Thyroid gland (tissue), 4 donors: ENCODE measurements at regions of chr14 and their contacts with region 1.

Region 1: GRCh38 chr14:23076785-23077408 is 18.0 kb downstream of the ACIN1 start:
- DNase-seq: no peak
- H3K4me3 ChIP-seq: no peak overlapping the region
- H3K27ac ChIP-seq: no peak overlapping the region
- H3K4me1 ChIP-seq: peaks cover 4 to 12% of the 10 kb centered on the region in 2 donors
- H3K27me3 ChIP-seq: no peaks in the 10 kb centered on the region
- CTCF ChIP-seq: peak; percentile 28 to 56 (median 46)
- POLR2A ChIP-seq: no peak

Region 2: DNA sequence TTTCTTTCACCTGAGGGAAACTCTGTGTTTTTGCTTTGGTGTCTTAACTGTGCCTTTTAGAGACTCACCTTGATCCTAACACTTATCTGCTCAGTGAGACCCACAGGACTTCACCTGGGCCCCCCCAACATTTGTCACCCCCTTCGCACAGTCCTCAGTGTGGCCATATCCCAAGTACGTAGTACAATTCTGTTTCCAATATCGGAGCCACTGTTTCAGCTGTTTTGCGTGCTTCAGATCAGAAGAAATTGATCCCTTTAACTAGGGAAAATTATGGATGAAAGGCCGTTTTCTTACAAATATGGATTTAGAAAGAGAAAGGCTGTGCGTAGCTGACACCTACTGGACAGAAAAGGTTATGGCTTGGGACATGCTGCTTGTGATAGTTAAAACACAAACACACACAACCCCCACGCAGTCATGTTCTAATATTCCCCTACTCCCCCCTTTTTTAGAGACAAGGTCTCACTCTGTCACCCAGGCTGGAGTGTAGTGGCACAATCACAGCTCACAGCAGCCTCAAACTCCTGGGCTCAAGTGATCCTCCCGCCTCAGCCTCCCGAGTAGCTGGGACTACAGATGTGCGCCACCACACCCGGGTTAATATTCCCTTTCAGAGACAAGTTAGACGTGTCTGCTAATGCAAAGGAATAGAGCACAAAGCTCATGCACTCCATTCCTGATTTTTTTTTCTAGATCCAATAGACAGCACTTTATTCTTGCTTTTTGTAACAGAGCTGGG is 110.2 kb after region 1 on chr14:
- intact Hi-C with region 1: loop called (anchors 5 kb)
- DNase-seq: peak; percentile 52 to 56
- H3K4me3 ChIP-seq: no peak overlapping the region
- H3K27ac ChIP-seq: no peak overlapping the region
- H3K4me1 ChIP-seq: peaks cover 0 to 4% of the 10 kb centered on the region in 2 donors
- H3K27me3 ChIP-seq: no peaks in the 10 kb centered on the region
- CTCF ChIP-seq: peak; percentile 49 to 99 (median 82)
- POLR2A ChIP-seq: no peak